ENCODE measurements at regions of chr11 and their contacts with region 1.

Region 1: DNA sequence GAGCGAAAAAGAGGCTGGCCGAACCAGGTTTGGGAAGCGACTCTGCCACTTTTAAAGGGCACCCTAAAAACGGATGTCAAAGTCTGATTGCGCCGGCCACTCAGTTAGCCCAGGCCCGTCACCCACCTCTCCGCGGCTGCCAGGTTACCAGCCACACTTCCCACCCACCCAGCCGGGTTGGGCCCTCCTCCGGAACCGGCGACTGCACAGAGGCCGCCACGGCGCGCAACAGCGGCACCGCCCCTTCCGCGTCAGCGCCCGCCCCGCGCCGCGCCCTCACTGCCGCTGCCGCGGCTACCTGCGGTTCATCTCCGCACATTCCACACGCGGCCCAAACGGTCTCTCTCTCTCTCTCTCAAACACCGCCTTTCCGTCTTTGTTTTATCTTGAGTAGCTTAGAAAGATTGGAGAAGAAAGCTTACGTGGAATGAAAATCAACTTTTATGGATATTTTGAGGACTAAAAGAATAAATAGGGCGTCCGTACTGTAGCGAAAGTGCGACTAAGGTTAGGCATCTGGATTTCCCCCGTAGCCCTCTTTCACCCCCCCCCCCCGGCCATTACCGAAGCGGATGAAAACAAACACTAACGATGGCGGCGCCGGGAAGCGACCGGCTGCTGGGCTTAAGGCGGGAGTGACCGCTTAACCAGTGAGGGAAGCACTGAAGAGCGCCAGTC is at the starts of genes ATG13 and HARBI1:
- DNase-seq: peak; percentile 90
- H3K4me3 ChIP-seq: peak within 1 kb of the TSS; percentile 83 to 100 (median 94)
- H3K27ac ChIP-seq: peak within 1 kb of the TSS; percentile 99
- H3K4me1 ChIP-seq: peaks cover 11% of the 10 kb centered on the region
- H3K27me3 ChIP-seq: no peaks in the 10 kb centered on the region
- CTCF ChIP-seq: no peak
- total RNA-seq, gene ATG13: 52.8 to 58.9 TPM
- total RNA-seq, gene HARBI1: 5.8 to 6.8 TPM

Region 2: DNA sequence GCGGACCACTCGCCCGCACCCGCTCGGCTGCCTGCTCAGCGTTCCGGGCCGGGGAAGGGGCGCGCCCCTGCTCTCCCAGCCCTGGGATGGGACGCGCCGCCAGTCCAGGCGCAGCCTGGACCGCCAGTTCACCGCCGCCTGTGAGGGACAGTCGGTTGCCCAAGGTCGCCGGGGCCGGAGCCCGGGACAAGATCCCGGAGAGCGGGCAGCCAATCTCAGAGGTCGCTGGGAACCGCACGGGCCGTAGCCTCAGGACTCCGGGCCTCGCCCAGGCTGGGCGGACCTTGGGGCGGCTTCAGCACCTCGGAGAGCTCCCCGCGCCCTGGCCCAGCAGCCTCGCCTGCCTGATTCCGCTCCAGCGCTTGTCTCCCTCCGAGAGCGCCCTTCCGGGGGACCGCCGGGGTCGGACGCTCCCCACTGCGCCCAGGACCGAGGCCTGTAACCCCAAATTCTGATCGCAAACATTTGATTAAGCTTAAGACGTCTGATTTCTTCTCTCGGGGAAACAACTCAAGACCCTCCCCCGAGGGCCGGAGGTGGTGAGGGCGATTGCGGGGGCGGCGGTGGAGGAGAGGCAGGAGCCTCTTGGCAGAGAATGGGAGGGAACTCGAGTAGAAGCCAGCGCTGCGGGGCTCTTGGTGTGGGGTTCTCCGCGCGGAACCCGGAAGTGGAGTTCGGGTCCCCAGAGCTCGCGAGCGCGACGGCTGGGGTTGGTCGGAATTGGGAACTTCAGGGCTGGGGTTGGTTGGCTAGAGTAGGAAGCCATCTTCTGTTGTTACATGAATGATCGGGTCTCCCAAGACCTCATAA is 224.5 kb before region 1 on chr11:
- CTCF ChIA-PET with region 1: no interaction called
- dilution Hi-C with region 1: no loop called
- in situ Hi-C with region 1: no loop called
- intact Hi-C with region 1: loop called (anchors 1 kb)
- DNase-seq: peak; percentile 69
- H3K4me3 ChIP-seq: peak overlapping the region in 2 of 3 experiments; percentile 41 to 42
- H3K27ac ChIP-seq: no peak overlapping the region
- H3K4me1 ChIP-seq: peaks cover 25% of the 10 kb centered on the region
- H3K27me3 ChIP-seq: peaks cover 13% of the 10 kb centered on the region
- CTCF ChIP-seq: no peak

Region 3: DNA sequence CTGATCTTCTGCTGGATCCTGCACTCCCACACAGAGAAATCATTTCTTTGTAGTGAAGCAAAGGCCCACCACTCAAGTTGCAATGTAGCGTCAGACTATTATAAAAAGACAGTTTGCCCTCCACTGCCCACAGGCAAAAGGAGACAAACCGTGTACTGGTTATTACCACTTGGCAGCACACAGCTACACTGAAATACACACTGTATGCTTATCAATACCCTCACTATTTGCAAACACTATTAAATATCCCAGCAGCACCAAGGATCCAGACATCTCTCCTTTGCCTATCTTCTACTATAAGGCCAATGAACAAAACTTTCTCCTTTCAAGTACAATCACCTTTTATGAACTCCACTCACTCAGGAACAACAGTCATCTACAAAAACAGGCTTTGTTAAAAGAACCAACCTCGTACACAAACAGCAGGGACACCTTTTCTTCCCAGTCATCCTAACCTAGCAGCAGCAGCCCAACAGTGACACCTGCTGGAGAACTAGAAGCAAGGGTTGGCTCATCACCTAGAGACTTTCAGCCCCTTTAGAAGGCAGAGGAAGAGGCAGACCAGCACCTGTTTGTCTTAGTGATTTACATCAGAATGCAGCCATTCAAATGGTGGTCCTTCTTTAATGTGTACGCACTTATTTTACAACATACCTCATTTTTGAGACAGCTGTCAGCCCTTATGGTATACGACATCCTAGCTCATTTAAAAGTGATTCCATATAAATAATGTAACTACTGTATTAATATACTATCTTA is 79.4 kb before region 1 on chr11:
- CTCF ChIA-PET with region 1: no interaction called
- dilution Hi-C with region 1: no loop called
- in situ Hi-C with region 1: no loop called
- intact Hi-C with region 1: loop called (anchors 2 kb)
- DNase-seq: peak; percentile 76
- H3K4me3 ChIP-seq: no peak overlapping the region
- H3K27ac ChIP-seq: peak overlapping the region; percentile 19
- H3K4me1 ChIP-seq: peaks cover 5% of the 10 kb centered on the region
- H3K27me3 ChIP-seq: no peaks in the 10 kb centered on the region
- CTCF ChIP-seq: peak; percentile 98 to 99

Region 4: GRCh38 chr11:46593550-46594373 is 23.4 kb before region 1 on chr11 and contains the start of gene AMBRA1:
- CTCF ChIA-PET with region 1: no interaction called
- dilution Hi-C with region 1: no loop called
- in situ Hi-C with region 1: no loop called
- intact Hi-C with region 1: loop called (anchors 1 kb)
- DNase-seq: peak; percentile 91
- H3K4me3 ChIP-seq: peak within 1 kb of the TSS; percentile 65 to 85 (median 80)
- H3K27ac ChIP-seq: peak within 1 kb of the TSS; percentile 60
- H3K4me1 ChIP-seq: peaks cover 13% of the 10 kb centered on the region
- H3K27me3 ChIP-seq: no peaks in the 10 kb centered on the region
- CTCF ChIP-seq: no peak
- total RNA-seq, gene AMBRA1: 23.2 to 26.3 TPM

Region 5: DNA sequence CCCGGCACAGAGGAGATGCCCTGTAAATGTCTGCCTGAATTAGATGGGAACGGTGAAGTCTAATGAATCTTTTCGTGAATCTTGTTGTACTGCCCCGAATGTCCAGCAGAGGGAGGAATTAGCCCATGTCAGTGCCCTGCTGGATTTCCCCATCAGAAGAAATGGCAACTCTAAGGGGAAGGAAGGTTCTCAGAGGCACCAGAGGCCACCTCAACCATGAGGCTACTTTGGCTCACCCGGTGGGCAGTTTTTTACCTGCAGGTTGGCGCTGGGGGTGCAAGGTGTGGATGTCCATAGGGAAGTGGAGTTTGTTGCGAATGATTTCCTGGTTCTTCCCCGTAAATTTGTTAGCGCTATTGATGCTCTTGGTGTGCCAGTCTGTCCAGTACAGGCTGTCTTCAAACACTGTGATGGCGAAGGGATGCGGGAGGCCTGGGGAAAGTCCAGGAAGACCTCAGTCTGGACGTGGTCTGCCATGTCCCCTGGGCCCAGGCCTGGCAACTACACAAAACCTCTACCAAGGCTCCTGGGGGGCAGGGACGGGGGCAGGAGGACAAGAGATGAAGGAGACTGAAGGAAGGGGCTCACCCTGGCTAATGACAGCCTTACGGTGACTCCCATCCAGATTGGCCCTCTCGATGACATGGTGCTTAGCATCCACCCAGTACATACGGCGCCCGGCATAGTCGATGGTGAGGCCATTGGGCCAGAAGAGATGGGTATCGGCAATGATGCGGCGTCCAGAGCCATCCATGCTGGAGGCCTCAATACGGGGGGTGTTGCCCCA is 272.7 kb after region 1 on chr11:
- CTCF ChIA-PET with region 1: no interaction called
- dilution Hi-C with region 1: no loop called
- in situ Hi-C with region 1: no loop called
- intact Hi-C with region 1: no loop called
- DNase-seq: peak; percentile 55
- H3K4me3 ChIP-seq: no peak overlapping the region
- H3K27ac ChIP-seq: no peak overlapping the region
- H3K4me1 ChIP-seq: no peaks in the 10 kb centered on the region
- H3K27me3 ChIP-seq: no peaks in the 10 kb centered on the region
- CTCF ChIP-seq: peak; percentile 89